HCT116 (cell line): ENCODE measurements at regions of chr5 and their contacts with region 1.

Region 1: GRCh38 chr5:139422307-139422893 is 16.9 kb downstream of the DNAJC18 start:
- DNase-seq: peak; percentile 48
- ATAC-seq: peak; percentile 89
- H3K4me3 ChIP-seq: no peak overlapping the region
- H3K27ac ChIP-seq: no peak overlapping the region
- H3K4me1 ChIP-seq: peaks cover 0 to 7% of the 10 kb centered on the region in 2 experiments; a peak in 3 of 4 replicates
- H3K27me3 ChIP-seq: no peaks in the 10 kb centered on the region
- CTCF ChIP-seq: peak; percentile 78 to 95 (median 95)
- POLR2A ChIP-seq: no peak
- RAD21 ChIP-seq: peak; percentile 96

Region 2: GRCh38 chr5:139513852-139514485 is 91.6 kb after region 1 on chr5:
- CTCF ChIA-PET with region 1: interaction called, 86 read pairs
- POLR2A ChIA-PET with region 1: interaction called, 3 read pairs
- RAD21 ChIA-PET with region 1: interaction called, 5 to 14 read pairs
- intact Hi-C with region 1: loop called (anchors 1 kb)
- DNase-seq: no peak
- ATAC-seq: peak; percentile 12
- H3K4me3 ChIP-seq: no peak overlapping the region
- H3K27ac ChIP-seq: no peak overlapping the region
- H3K4me1 ChIP-seq: peaks cover 5 to 13% of the 10 kb centered on the region in 2 experiments; a peak in 3 of 4 replicates
- H3K27me3 ChIP-seq: no peaks in the 10 kb centered on the region
- CTCF ChIP-seq: no peak; a peak in 1 of 6 replicates
- POLR2A ChIP-seq: no peak
- RAD21 ChIP-seq: no peak

Region 3: GRCh38 chr5:139574641-139575312 is 152.4 kb after region 1 on chr5:
- CTCF ChIA-PET with region 1: interaction called, 6 read pairs
- POLR2A ChIA-PET with region 1: no interaction called
- RAD21 ChIA-PET with region 1: no interaction called
- intact Hi-C with region 1: loop called (anchors 2 kb)
- DNase-seq: no peak
- ATAC-seq: peak; percentile 84
- H3K4me3 ChIP-seq: no peak overlapping the region
- H3K27ac ChIP-seq: no peak overlapping the region
- H3K4me1 ChIP-seq: peaks cover 9 to 18% of the 10 kb centered on the region in 2 experiments; a peak in 3 of 4 replicates
- H3K27me3 ChIP-seq: no peaks in the 10 kb centered on the region
- CTCF ChIP-seq: peak; percentile 48 to 71 (median 69); a peak in 5 of 6 replicates
- POLR2A ChIP-seq: no peak
- RAD21 ChIP-seq: peak; percentile 63

Region 4: GRCh38 chr5:139765409-139766217 is 343.2 kb after region 1 on chr5:
- CTCF ChIA-PET with region 1: interaction called, 7 read pairs
- POLR2A ChIA-PET with region 1: no interaction called
- RAD21 ChIA-PET with region 1: interaction called in 1 of 2 experiments, 3 read pairs
- intact Hi-C with region 1: loop called (anchors 2 kb)
- DNase-seq: no peak
- ATAC-seq: peak; percentile 91
- H3K4me3 ChIP-seq: peak overlapping the region; percentile 43 to 52
- H3K27ac ChIP-seq: peak overlapping the region; percentile 51; the same call in 1 of the 2 replicates
- H3K4me1 ChIP-seq: peaks cover 15 to 36% of the 10 kb centered on the region in 2 experiments; a peak in 3 of 4 replicates
- H3K27me3 ChIP-seq: no peaks in the 10 kb centered on the region
- CTCF ChIP-seq: peak in 2 of 3 experiments; percentile 83 to 95; a peak in 4 of 6 replicates
- POLR2A ChIP-seq: no peak
- RAD21 ChIP-seq: no peak